Naive thymus-derived CD4-positive, alpha-beta T cell (primary cell): ENCODE measurements at regions of chr15 and their contacts with region 1.

Region 1: DNA sequence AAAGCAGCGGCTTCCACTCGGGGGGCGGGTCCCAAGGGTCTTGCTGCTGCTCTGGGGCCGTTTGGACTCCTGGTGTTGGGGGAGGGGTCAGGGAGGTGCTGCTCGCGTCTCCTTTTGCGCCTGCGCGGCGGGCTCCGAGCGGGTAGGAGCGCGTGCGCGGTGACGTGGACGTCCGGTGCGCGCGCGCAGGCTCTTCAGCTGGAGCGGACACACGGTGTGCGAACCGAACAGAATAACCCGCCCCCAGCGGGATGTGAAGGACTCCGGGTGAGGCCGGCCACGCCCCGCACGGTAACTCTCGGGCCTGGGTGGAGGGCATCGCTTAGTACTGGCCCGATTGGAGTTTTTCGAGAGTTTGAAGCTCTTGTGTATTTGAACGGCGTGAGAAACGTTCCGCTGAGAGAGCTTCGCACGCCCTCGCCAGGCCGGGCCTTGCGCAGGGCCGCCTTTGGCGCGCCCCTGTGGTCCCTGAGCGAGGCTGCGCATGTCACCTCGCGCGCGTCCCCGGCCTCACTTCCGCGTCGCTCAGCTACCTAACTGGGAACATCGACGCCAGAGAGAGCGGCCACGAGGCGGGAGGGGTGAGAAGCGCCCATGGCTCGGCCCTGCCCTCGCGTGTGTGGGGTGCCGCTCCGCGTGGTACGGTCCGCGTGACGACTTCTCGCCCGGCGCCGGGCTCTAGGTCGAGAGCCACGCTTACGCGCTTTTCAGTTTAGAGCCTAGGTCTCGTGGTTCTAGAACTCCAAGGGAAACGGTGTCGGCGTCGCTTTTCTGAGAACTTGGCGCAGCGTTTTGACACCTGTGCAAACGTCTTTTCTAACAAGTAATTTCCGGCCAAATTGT is at the start of gene MGA:
- DNase-seq: peak; percentile 86 to 93 (median 91)
- ATAC-seq: peak; percentile 87
- H3K4me3 ChIP-seq: peak within 1 kb of the TSS; percentile 64
- H3K4me3 Mint-ChIP-seq: peak within 1 kb of the TSS; percentile 90 to 100 (median 92)
- H3K27ac ChIP-seq: peak within 1 kb of the TSS; percentile 76
- H3K27ac Mint-ChIP-seq: peak within 1 kb of the TSS; percentile 92 to 98 (median 96)
- H3K4me1 ChIP-seq: peaks cover 20 to 28% of the 10 kb centered on the region in 2 donors
- H3K4me1 Mint-ChIP-seq: peaks cover 16 to 64% (median 47%) of the 10 kb centered on the region in 7 donors
- H3K27me3 ChIP-seq: no peaks in the 10 kb centered on the region
- H3K27me3 Mint-ChIP-seq: peaks cover 0 to 45% (median 0%) of the 10 kb centered on the region in 5 donors
- total RNA-seq, gene MGA: 35.8 to 73.8 (median 47.3) TPM

Region 2: DNA sequence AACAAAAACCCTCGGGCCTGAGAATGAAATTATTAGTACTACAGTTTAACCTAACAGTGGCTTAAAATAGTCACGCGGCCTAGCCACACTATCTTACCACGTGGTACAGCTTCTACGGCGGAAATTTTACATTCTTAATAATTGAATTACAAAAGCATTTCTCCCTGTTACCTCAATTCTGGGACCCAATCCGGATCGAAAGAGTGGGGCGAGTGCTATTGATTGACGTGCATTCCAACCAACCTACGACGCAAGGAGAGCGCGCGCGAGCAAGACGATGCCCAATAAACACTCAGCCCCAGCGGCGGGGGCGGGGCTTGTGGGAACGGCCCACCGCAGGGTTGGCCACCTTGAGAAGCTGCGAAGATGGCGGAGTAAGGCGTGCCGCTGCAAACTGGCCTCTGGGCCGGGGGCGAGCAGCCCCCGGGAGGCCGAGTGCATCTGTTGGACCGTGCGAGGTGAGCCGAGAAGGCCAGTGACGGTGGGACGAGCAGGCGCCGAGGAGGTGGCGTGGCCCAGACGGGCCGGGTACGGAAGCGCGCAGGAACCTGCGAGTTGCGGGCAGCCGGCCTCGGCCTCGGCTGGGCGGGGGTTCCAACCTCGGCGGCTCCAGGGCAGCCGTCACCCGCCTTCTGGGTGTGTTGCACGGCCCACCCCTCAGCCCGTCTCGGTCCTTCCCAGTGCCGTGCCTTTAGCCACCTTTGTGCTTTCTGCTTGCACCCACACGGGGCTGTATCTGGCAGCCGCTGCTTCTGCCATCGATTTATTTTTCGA is 376.6 kb before region 1 on chr15:
- CTCF ChIA-PET with region 1: no interaction called
- POLR2A ChIA-PET with region 1: no interaction called
- intact Hi-C with region 1: loop called in 1 of 2 experiments (anchors 5 kb)
- DNase-seq: peak; percentile 94 to 98 (median 97)
- ATAC-seq: peak; percentile 98
- H3K4me3 ChIP-seq: peak overlapping the region; percentile 89
- H3K4me3 Mint-ChIP-seq: peak overlapping the region; percentile 90 to 100 (median 92)
- H3K27ac ChIP-seq: peak overlapping the region; percentile 91
- H3K27ac Mint-ChIP-seq: peak overlapping the region; percentile 96 to 99 (median 97)
- H3K4me1 ChIP-seq: peaks cover 21 to 31% of the 10 kb centered on the region in 2 donors
- H3K4me1 Mint-ChIP-seq: peaks cover 22 to 54% (median 51%) of the 10 kb centered on the region in 7 donors
- H3K27me3 ChIP-seq: no peaks in the 10 kb centered on the region
- H3K27me3 Mint-ChIP-seq: peaks cover 0 to 2% (median 0%) of the 10 kb centered on the region in 5 donors

Region 3: GRCh38 chr15:41416742-41417406 is 243.6 kb before region 1 on chr15 and contains the start of gene RTF1:
- CTCF ChIA-PET with region 1: no interaction called
- POLR2A ChIA-PET with region 1: no interaction called
- intact Hi-C with region 1: loop called in 1 of 2 experiments (anchors 2 kb)
- DNase-seq: peak; percentile 92 to 100 (median 96)
- ATAC-seq: peak; percentile 99
- H3K4me3 ChIP-seq: peak within 1 kb of the TSS; percentile 98
- H3K4me3 Mint-ChIP-seq: peak within 1 kb of the TSS; percentile 86 to 96 (median 95)
- H3K27ac ChIP-seq: peak within 1 kb of the TSS; percentile 81
- H3K27ac Mint-ChIP-seq: peak within 1 kb of the TSS; percentile 74 to 98 (median 93)
- H3K4me1 ChIP-seq: peaks cover 6 to 16% of the 10 kb centered on the region in 2 donors
- H3K4me1 Mint-ChIP-seq: peaks cover 34 to 53% (median 43%) of the 10 kb centered on the region in 7 donors
- H3K27me3 ChIP-seq: no peaks in the 10 kb centered on the region
- H3K27me3 Mint-ChIP-seq: no peaks in the 10 kb centered on the region
- total RNA-seq, gene RTF1: 34.0 to 41.3 (median 37.2) TPM

Region 4: DNA sequence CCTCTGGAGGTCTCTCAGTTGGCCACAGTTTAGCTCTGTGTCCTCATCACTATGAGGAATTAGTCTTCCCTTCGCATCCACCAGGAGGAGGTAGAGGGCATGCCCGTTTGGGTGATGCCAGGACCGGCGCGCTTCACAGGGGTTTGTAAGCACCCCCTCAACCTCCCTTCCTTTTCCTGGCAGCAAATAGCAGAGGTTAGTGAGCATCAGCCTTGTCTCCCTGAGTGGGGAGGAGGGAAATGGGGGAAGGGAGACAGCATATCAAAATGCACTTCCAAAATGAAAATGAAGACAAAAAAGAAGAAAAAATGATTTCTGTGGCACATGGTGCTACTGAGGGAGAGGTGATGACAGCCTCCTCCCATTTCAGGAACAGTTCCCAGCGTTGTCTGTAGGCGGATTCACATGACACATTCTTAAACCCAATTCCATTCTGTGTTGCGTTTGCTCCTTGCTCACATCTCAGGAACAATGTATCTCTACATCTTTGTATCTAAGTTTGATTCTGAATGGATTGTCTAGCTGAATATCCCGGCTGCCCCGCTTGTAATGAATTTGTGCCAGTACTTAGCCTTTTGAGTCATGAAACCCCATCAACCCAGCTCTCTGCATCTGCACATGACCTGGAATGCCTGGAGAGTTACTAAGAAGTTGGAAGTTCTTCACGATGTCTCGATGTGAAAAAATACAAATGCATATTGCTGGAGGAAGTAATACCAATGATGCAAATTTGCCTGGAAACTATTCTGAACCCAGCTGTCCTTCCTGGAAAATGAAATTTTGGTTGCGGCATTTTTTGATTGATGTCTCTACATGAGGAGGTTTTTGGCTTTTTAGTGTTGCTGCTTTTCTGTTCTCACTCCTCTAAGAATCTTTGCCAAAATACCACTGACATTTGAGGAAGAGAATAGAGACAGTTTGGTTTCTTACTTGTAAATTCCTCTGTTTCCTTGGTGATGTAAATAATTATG is 56.2 kb before region 1 on chr15:
- CTCF ChIA-PET with region 1: interaction called, 13 read pairs
- POLR2A ChIA-PET with region 1: interaction called, 8 read pairs
- intact Hi-C with region 1: loop called in 1 of 2 experiments (anchors 1 kb)
- DNase-seq: peak; percentile 19 to 62 (median 50)
- ATAC-seq: peak; percentile 93
- H3K4me3 ChIP-seq: no peak overlapping the region
- H3K4me3 Mint-ChIP-seq: peak overlapping the region in 9 of 10 donors; percentile 17 to 81 (median 73)
- H3K27ac ChIP-seq: no peak overlapping the region
- H3K27ac Mint-ChIP-seq: peak overlapping the region in 1 of 9 donors; percentile 74
- H3K4me1 ChIP-seq: peaks cover 0 to 5% of the 10 kb centered on the region in 2 donors
- H3K4me1 Mint-ChIP-seq: peaks cover 3 to 10% (median 7%) of the 10 kb centered on the region in 7 donors
- H3K27me3 ChIP-seq: no peaks in the 10 kb centered on the region
- H3K27me3 Mint-ChIP-seq: peaks cover 0 to 43% (median 9%) of the 10 kb centered on the region in 5 donors

Region 5: DNA sequence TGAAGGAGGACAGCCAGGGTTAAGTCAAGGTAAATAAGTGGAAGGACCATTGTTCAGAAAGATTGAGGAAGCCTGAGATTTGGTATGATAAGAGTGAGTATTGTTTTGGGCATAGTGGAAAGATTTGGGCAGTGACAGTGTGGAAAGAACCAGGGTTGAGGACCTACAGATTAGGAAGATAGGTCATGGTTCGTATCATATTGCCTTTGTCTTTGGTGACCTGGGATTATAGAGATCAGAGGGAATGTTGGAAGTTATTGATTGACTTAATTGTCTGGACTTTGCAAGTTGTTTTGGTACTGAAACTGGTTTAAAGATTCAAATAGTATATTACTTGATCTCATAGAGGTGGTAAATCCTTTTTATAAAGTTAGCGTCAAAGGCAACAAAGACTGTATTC is 23.4 kb before region 1 on chr15:
- CTCF ChIA-PET with region 1: no interaction called
- POLR2A ChIA-PET with region 1: no interaction called
- intact Hi-C with region 1: no loop called
- DNase-seq: no peak
- ATAC-seq: no peak
- H3K4me3 ChIP-seq: no peak overlapping the region
- H3K4me3 Mint-ChIP-seq: no peak overlapping the region
- H3K27ac ChIP-seq: no peak overlapping the region
- H3K27ac Mint-ChIP-seq: peak overlapping the region in 1 of 9 donors; percentile 26
- H3K4me1 ChIP-seq: no peaks in the 10 kb centered on the region
- H3K4me1 Mint-ChIP-seq: peaks cover 0 to 16% (median 9%) of the 10 kb centered on the region in 7 donors
- H3K27me3 ChIP-seq: no peaks in the 10 kb centered on the region
- H3K27me3 Mint-ChIP-seq: peaks cover 0 to 3% (median 0%) of the 10 kb centered on the region in 5 donors

Region 6: GRCh38 chr15:41695750-41696426 is 35.4 kb after region 1 on chr15:
- CTCF ChIA-PET with region 1: interaction called, 4 read pairs
- POLR2A ChIA-PET with region 1: interaction called, 4 read pairs
- intact Hi-C with region 1: loop called (anchors 1 to 2 kb)
- DNase-seq: peak in 7 of 9 donors; percentile 22 to 56 (median 44)
- ATAC-seq: peak; percentile 97
- H3K4me3 ChIP-seq: no peak overlapping the region
- H3K4me3 Mint-ChIP-seq: peak overlapping the region; percentile 3 to 69 (median 56)
- H3K27ac ChIP-seq: peak overlapping the region; percentile 42
- H3K27ac Mint-ChIP-seq: peak overlapping the region; percentile 22 to 81 (median 67)
- H3K4me1 ChIP-seq: peaks cover 0 to 10% of the 10 kb centered on the region in 2 donors
- H3K4me1 Mint-ChIP-seq: peaks cover 25 to 74% (median 59%) of the 10 kb centered on the region in 7 donors
- H3K27me3 ChIP-seq: no peaks in the 10 kb centered on the region
- H3K27me3 Mint-ChIP-seq: no peaks in the 10 kb centered on the region

Region 7: GRCh38 chr15:41972253-41973242 is 312.1 kb after region 1 on chr15 and contains the start of gene EHD4:
- CTCF ChIA-PET with region 1: no interaction called
- POLR2A ChIA-PET with region 1: no interaction called
- intact Hi-C with region 1: loop called in 1 of 2 experiments (anchors 1 kb)
- DNase-seq: peak; percentile 85 to 96 (median 94)
- ATAC-seq: peak; percentile 91
- H3K4me3 ChIP-seq: peak within 1 kb of the TSS; percentile 87
- H3K4me3 Mint-ChIP-seq: peak within 1 kb of the TSS; percentile 85 to 97 (median 94)
- H3K27ac ChIP-seq: peak within 1 kb of the TSS; percentile 83
- H3K27ac Mint-ChIP-seq: peak within 1 kb of the TSS; percentile 90 to 97 (median 95)
- H3K4me1 ChIP-seq: peaks cover 19 to 23% of the 10 kb centered on the region in 2 donors
- H3K4me1 Mint-ChIP-seq: peaks cover 31 to 55% (median 45%) of the 10 kb centered on the region in 7 donors
- H3K27me3 ChIP-seq: no peaks in the 10 kb centered on the region
- H3K27me3 Mint-ChIP-seq: peaks cover 0 to 17% (median 7%) of the 10 kb centered on the region in 5 donors
- total RNA-seq, gene EHD4: 10.4 to 48.3 (median 23.7) TPM